Activated T-helper 2 cell treated with anti-CD3 and anti-CD28 coated beads, Interferon-gamma antibody, Interleukin-2, Interleukin-4, amounts not matched to agents 10 μg/mL and 5 μg/mL and 100 μg/mL, durations not matched to agents 14 hours and 24 hours and 36 hours (primary cell): ENCODE measurements at regions of chr13 and their contacts with region 1.

Region 1: GRCh38 chr13:25301347-25302047 is at the start of gene NUP58:
- DNase-seq: peak; percentile 93
- H3K4me3 Mint-ChIP-seq: peak within 1 kb of the TSS; percentile 94
- H3K27ac Mint-ChIP-seq: peak within 1 kb of the TSS; percentile 91
- H3K4me1 Mint-ChIP-seq: peaks cover 35% of the 10 kb centered on the region
- H3K27me3 Mint-ChIP-seq: peaks cover 17% of the 10 kb centered on the region
- total RNA-seq, gene NUP58: 129 and 131 TPM in 2 replicates

Region 2: GRCh38 chr13:25267715-25268114 is 33.8 kb before region 1 on chr13:
- intact Hi-C with region 1: loop called (anchors 5 kb)
- DNase-seq: no peak
- H3K4me3 Mint-ChIP-seq: no peak overlapping the region
- H3K27ac Mint-ChIP-seq: no peak overlapping the region
- H3K4me1 Mint-ChIP-seq: peaks cover 3% of the 10 kb centered on the region
- H3K27me3 Mint-ChIP-seq: no peaks in the 10 kb centered on the region

Region 3: GRCh38 chr13:25744178-25744577 is 442.7 kb after region 1 on chr13:
- intact Hi-C with region 1: no loop called
- DNase-seq: no peak
- H3K4me3 Mint-ChIP-seq: no peak overlapping the region
- H3K27ac Mint-ChIP-seq: no peak overlapping the region
- H3K4me1 Mint-ChIP-seq: no peaks in the 10 kb centered on the region
- H3K27me3 Mint-ChIP-seq: peaks cover 7% of the 10 kb centered on the region